B cell (primary cell): ENCODE measurements at regions of chr11 and their contacts with region 1.

Region 1: GRCh38 chr11:124800226-124800929 is at the start of gene MSANTD2:
- DNase-seq: peak; percentile 89
- ATAC-seq: peak; percentile 84
- H3K4me3 ChIP-seq: peak within 1 kb of the TSS; percentile 57 to 95 (median 91)
- H3K4me3 Mint-ChIP-seq: peak within 1 kb of the TSS; percentile 94
- H3K27ac ChIP-seq: peak within 1 kb of the TSS; percentile 96 to 99
- H3K27ac Mint-ChIP-seq: peak within 1 kb of the TSS; percentile 93
- H3K4me1 ChIP-seq: peaks cover 15 to 17% of the 10 kb centered on the region in 2 donors
- H3K4me1 Mint-ChIP-seq: peaks cover 22% of the 10 kb centered on the region
- H3K27me3 ChIP-seq: no peaks in the 10 kb centered on the region
- H3K27me3 Mint-ChIP-seq: no peaks in the 10 kb centered on the region
- CTCF ChIP-seq: peak; percentile 2
- total RNA-seq, gene MSANTD2: 26.8 and 33.4 TPM in 2 replicates

Region 2: GRCh38 chr11:123741159-123742028 is 1059.0 kb before region 1 on chr11 and contains the start of gene ZNF202:
- CTCF ChIA-PET with region 1: no interaction called
- POLR2A ChIA-PET with region 1: no interaction called
- intact Hi-C with region 1: loop called (anchors 5 kb)
- DNase-seq: peak; percentile 93
- ATAC-seq: peak; percentile 90
- H3K4me3 ChIP-seq: peak within 1 kb of the TSS; percentile 73 to 96 (median 82)
- H3K4me3 Mint-ChIP-seq: peak within 1 kb of the TSS; percentile 98
- H3K27ac ChIP-seq: peak within 1 kb of the TSS; percentile 59 to 84
- H3K27ac Mint-ChIP-seq: peak within 1 kb of the TSS; percentile 96
- H3K4me1 ChIP-seq: peaks cover 20 to 21% of the 10 kb centered on the region in 2 donors
- H3K4me1 Mint-ChIP-seq: peaks cover 37% of the 10 kb centered on the region
- H3K27me3 ChIP-seq: peaks cover 0 to 7% (median 0%) of the 10 kb centered on the region in 4 experiments
- H3K27me3 Mint-ChIP-seq: peaks cover 9% of the 10 kb centered on the region
- CTCF ChIP-seq: no peak
- total RNA-seq, gene ZNF202: 25.1 and 32.3 TPM in 2 replicates

Region 3: GRCh38 chr11:124739479-124740276 is 60.7 kb before region 1 on chr11 and contains the start of gene NRGN:
- CTCF ChIA-PET with region 1: interaction called, 3 read pairs
- POLR2A ChIA-PET with region 1: no interaction called
- intact Hi-C with region 1: loop called (anchors 1 kb)
- DNase-seq: peak; percentile 84
- ATAC-seq: peak; percentile 96
- H3K4me3 ChIP-seq: peak within 1 kb of the TSS; percentile 44 to 68 (median 62)
- H3K4me3 Mint-ChIP-seq: peak within 1 kb of the TSS; percentile 92
- H3K27ac ChIP-seq: no peak within 1 kb of the TSS
- H3K27ac Mint-ChIP-seq: peak within 1 kb of the TSS; percentile 60
- H3K4me1 ChIP-seq: peaks cover 8 to 17% of the 10 kb centered on the region in 2 donors
- H3K4me1 Mint-ChIP-seq: peaks cover 16% of the 10 kb centered on the region
- H3K27me3 ChIP-seq: peaks cover 0 to 13% (median 2%) of the 10 kb centered on the region in 4 experiments
- H3K27me3 Mint-ChIP-seq: no peaks in the 10 kb centered on the region
- CTCF ChIP-seq: no peak
- total RNA-seq, gene NRGN: 0.66 TPM in 1 of 2 replicates, not detected in the other

Region 4: GRCh38 chr11:124758317-124759203 is 41.8 kb before region 1 on chr11:
- CTCF ChIA-PET with region 1: interaction called, 60 read pairs
- POLR2A ChIA-PET with region 1: interaction called, 3 read pairs
- intact Hi-C with region 1: loop called (anchors 1 kb)
- DNase-seq: peak; percentile 83
- ATAC-seq: peak; percentile 67
- H3K4me3 ChIP-seq: peak overlapping the region in 4 of 5 experiments; percentile 27 to 81 (median 43)
- H3K4me3 Mint-ChIP-seq: peak overlapping the region; percentile 81
- H3K27ac ChIP-seq: peak overlapping the region in 1 of 2 donors; percentile 22
- H3K27ac Mint-ChIP-seq: no peak overlapping the region
- H3K4me1 ChIP-seq: peaks cover 38 to 53% of the 10 kb centered on the region in 2 donors
- H3K4me1 Mint-ChIP-seq: peaks cover 39% of the 10 kb centered on the region
- H3K27me3 ChIP-seq: peaks cover 0 to 22% (median 10%) of the 10 kb centered on the region in 4 experiments
- H3K27me3 Mint-ChIP-seq: peaks cover 11% of the 10 kb centered on the region
- CTCF ChIP-seq: peak; percentile 84

Region 5: DNA sequence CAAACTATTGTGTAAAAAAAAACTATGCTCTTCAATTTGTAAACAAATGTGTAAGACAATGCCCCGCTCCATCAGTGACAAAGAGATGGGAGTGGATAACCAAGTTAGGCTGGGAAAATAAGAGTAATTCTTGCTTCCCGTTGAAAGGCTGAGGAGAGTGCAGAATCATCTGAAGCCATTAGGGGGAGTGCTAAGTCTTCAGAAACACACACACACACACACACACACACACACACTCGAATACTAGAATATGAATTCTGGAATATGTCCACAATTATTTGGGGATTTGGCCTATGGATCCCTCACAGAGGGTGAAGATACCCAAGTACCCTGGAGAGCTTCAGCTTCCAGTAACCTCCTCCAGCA is 37.1 kb after region 1 on chr11:
- CTCF ChIA-PET with region 1: interaction called, 20 read pairs
- POLR2A ChIA-PET with region 1: interaction called, 3 read pairs
- intact Hi-C with region 1: loop called (anchors 1 kb)
- DNase-seq: peak; percentile 43
- ATAC-seq: no peak
- H3K4me3 ChIP-seq: no peak overlapping the region
- H3K4me3 Mint-ChIP-seq: no peak overlapping the region
- H3K27ac ChIP-seq: no peak overlapping the region
- H3K27ac Mint-ChIP-seq: no peak overlapping the region
- H3K4me1 ChIP-seq: peaks cover 24 to 30% of the 10 kb centered on the region in 2 donors
- H3K4me1 Mint-ChIP-seq: peaks cover 18% of the 10 kb centered on the region
- H3K27me3 ChIP-seq: peaks cover 0 to 53% (median 42%) of the 10 kb centered on the region in 4 experiments
- H3K27me3 Mint-ChIP-seq: peaks cover 62% of the 10 kb centered on the region
- CTCF ChIP-seq: no peak

Region 6: GRCh38 chr11:125111343-125112207 is 311.2 kb after region 1 on chr11 and contains the start of gene TMEM218:
- CTCF ChIA-PET with region 1: no interaction called
- POLR2A ChIA-PET with region 1: no interaction called
- intact Hi-C with region 1: loop called (anchors 1 kb)
- DNase-seq: peak; percentile 100
- ATAC-seq: peak; percentile 95
- H3K4me3 ChIP-seq: peak within 1 kb of the TSS; percentile 66 to 94 (median 80)
- H3K4me3 Mint-ChIP-seq: peak within 1 kb of the TSS; percentile 98
- H3K27ac ChIP-seq: peak within 1 kb of the TSS; percentile 79
- H3K27ac Mint-ChIP-seq: peak within 1 kb of the TSS; percentile 99
- H3K4me1 ChIP-seq: peaks cover 8 to 14% of the 10 kb centered on the region in 2 donors
- H3K4me1 Mint-ChIP-seq: peaks cover 20% of the 10 kb centered on the region
- H3K27me3 ChIP-seq: peaks cover 0 to 2% (median under 1%) of the 10 kb centered on the region in 4 experiments
- H3K27me3 Mint-ChIP-seq: peaks cover under 1% of the 10 kb centered on the region
- CTCF ChIP-seq: no peak
- total RNA-seq, gene TMEM218: 20.7 TPM in 2 replicates